H1 (cell line): ENCODE measurements at regions of chr14 and their contacts with region 1.

Region 1: DNA sequence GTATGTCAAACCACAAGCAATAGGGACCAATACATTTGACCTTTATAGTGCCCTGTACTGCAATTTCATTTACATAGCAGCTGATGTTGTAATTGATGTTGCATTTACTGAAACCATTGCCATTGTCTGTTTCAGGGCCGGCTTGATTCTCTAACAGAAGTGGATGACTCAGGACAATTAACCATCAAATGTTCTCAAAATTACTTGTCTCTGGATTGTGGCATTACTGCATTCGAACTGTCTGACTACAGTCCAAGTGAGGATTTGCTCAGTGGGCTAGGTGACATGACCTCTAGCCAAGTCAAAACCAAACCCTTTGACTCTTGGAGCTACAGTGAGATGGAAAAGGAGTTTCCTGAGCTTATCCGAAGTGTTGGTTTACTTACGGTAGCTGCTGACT is 216.0 kb downstream of the AKAP6 start:
- DNase-seq: no peak
- H3K4me3 ChIP-seq: no peak overlapping the region
- H3K27ac ChIP-seq: no peak overlapping the region
- H3K4me1 ChIP-seq: no peaks in the 10 kb centered on the region
- H3K27me3 ChIP-seq: no peaks in the 10 kb centered on the region
- CTCF ChIP-seq: no peak
- EP300 ChIP-seq: no peak
- POLR2A ChIP-seq: no peak
- RAD21 ChIP-seq: no peak

Region 2: DNA sequence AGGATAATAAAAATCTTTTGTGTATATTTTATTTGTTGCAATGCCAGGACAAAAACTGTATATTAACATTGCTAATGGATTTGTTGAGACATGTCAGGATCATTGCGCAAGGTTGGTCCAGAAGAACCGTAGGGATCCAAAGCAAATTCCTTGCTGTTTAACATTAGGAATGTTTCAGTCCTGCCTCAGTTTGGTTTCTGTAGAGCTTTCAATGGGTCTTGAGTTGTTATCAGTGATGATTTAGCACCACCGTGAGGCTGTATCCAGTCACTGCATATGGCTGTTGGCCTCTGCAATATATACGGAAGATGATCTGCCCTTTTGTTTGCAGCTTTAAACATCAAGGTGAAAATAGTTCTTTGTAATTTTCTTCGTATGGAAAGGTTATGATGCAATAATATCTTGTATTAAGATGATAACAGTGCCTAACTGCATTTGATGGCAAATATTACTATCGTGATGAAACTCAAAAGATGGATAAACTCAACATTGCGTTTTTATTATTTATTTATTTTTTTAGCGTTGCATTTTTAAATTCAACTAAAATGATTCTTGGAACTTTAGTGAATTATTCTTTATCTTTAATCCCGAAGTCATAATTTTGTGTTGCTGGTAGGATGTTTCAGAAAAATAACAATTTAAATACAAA is 15.2 kb after region 1 on chr14:
- CTCF ChIA-PET with region 1: interaction called, 13 read pairs
- POLR2A ChIA-PET with region 1: no interaction called
- DNase-seq: peak in 1 of 2 experiments; percentile 60
- H3K4me3 ChIP-seq: no peak overlapping the region
- H3K27ac ChIP-seq: no peak overlapping the region
- H3K4me1 ChIP-seq: peaks cover 0 to 3% (median 0%) of the 10 kb centered on the region in 4 experiments; a peak in 1 of 7 replicates
- H3K27me3 ChIP-seq: no peaks in the 10 kb centered on the region
- CTCF ChIP-seq: peak in 2 of 3 experiments; percentile 66 to 91; a peak in 3 of 4 replicates
- EP300 ChIP-seq: no peak
- POLR2A ChIP-seq: no peak
- RAD21 ChIP-seq: peak; percentile 92 to 96